Astrocyte of the cerebellum (primary cell): ENCODE measurements at regions of chr17 and their contacts with region 1.

Region 1: GRCh38 chr17:34361478-34362061 is 1.5 kb downstream of the CCL1 start:
- DNase-seq: peak; percentile 86
- H3K4me3 ChIP-seq: no peak overlapping the region
- CTCF ChIP-seq: peak; percentile 100

Region 2: GRCh38 chr17:34199932-34200534 is 161.5 kb before region 1 on chr17:
- in situ Hi-C with region 1: loop called (anchors 25 kb)
- DNase-seq: peak; percentile 80
- H3K4me3 ChIP-seq: no peak overlapping the region
- CTCF ChIP-seq: peak; percentile 100

Region 3: DNA sequence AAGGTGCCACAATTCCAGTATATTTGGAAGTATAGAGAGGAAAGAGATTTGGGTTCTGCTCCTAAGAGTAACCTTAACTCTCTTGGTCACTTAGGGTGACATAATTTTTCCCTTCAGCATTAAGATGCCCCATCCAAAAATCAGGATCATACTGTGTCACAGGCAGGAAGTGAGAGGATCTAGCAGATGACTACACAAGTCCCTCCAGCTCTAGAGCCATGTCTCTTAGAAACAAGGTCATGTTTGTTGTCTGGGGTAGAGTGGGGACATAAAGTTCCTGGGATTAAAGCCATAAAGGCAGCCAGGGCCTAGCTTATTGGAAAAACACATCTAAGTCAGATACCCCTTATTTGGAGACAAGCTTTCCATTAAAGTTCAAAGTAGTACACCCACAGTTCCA is 39.6 kb before region 1 on chr17:
- in situ Hi-C with region 1: loop called (anchors 5 kb)
- DNase-seq: no peak
- H3K4me3 ChIP-seq: no peak overlapping the region
- CTCF ChIP-seq: no peak